Aorta (tissue), 5 donors: ENCODE measurements at regions of chr12 and their contacts with region 1.

Region 1: DNA sequence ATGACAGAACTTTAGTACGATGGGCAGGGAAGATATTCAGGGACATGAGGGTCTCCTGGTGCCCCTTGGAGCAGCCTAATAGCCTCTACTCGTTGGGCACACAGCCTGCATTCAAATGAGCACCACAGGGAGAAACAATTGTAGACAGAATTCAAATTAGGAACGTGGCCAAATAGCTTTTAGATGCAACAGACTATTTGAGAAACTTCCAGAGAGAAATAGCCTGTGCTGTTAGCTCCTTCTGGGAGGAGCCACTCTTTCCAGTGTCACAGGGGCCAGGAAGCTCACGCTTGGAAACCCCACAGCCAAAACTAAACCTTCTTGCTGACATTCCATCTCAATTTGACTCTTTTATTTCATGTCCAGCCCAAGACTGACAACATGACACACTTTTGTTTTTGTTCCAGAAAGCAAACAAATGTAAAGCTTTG is 114.5 kb downstream of the RPAP3 start:
- DNase-seq: no peak
- ATAC-seq: no peak
- H3K4me3 ChIP-seq: no peak overlapping the region
- H3K27ac ChIP-seq: no peak overlapping the region
- H3K4me1 ChIP-seq: no peaks in the 10 kb centered on the region
- H3K27me3 ChIP-seq: no peaks in the 10 kb centered on the region

Region 2: GRCh38 chr12:46147144-46147543 is 1444.2 kb before region 1 on chr12:
- intact Hi-C with region 1: loop called in 1 of 2 experiments (anchors 10 kb)
- DNase-seq: no peak
- ATAC-seq: no peak
- H3K4me3 ChIP-seq: no peak overlapping the region
- H3K27ac ChIP-seq: no peak overlapping the region
- H3K4me1 ChIP-seq: no peaks in the 10 kb centered on the region
- H3K27me3 ChIP-seq: no peaks in the 10 kb centered on the region